ENCODE measurements at regions of chr7 and their contacts with region 1.

Region 1: GRCh38 chr7:16242920-16243319 is 178.4 kb downstream of the CRPPA start:
- DNase-seq: no peak
- ATAC-seq: no peak
- H3K4me3 ChIP-seq: no peak overlapping the region
- H3K27ac ChIP-seq: no peak overlapping the region
- H3K4me1 ChIP-seq: no peaks in the 10 kb centered on the region
- H3K27me3 ChIP-seq: no peaks in the 10 kb centered on the region
- CTCF ChIP-seq: no peak

Region 2: DNA sequence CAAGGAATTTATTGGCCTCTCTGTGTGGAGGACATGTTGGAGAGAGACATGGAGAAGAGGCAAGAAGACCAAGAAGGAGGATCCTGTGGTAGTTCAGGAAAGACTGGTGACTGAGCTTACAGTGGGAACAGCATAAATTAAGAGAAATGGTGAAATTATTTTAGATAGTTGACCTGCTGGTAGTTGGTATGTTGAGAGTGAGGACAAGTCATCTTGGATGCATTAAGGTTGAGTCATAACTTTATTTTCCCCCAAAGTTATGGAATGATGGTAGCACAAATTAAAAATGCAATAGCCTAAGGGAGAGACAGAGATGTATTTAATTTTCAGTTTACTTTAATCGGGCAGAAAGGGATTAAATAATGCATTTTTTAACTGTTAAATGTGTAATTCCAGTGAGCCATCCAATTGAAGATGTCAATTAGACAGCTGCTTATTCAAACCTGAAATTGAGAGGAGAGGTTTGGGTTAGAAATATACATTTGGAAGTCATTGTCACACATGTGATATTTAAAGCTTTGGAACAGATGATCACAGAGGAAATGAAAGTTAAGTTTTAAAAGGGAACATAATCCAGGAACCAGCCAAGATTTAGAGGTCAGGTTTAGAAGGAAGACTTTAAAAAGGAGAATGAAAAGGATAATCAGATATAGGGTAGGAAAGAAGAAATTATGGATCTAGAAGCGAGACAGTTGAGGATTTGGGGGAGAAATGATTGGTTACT is 1421.0 kb before region 1 on chr7:
- CTCF ChIA-PET with region 1: no interaction called
- POLR2A ChIA-PET with region 1: interaction called, 18 read pairs
- in situ Hi-C with region 1: no loop called
- intact Hi-C with region 1: no loop called
- DNase-seq: no peak
- ATAC-seq: no peak
- H3K4me3 ChIP-seq: no peak overlapping the region
- H3K27ac ChIP-seq: no peak overlapping the region
- H3K4me1 ChIP-seq: no peaks in the 10 kb centered on the region
- H3K27me3 ChIP-seq: no peaks in the 10 kb centered on the region
- CTCF ChIP-seq: no peak

Region 3: GRCh38 chr7:16564909-16565426 is 322.0 kb after region 1 on chr7:
- CTCF ChIA-PET with region 1: no interaction called
- POLR2A ChIA-PET with region 1: no interaction called
- in situ Hi-C with region 1: no loop called
- intact Hi-C with region 1: no loop called
- DNase-seq: peak; percentile 42
- ATAC-seq: peak; percentile 82
- H3K4me3 ChIP-seq: no peak overlapping the region
- H3K27ac ChIP-seq: no peak overlapping the region
- H3K4me1 ChIP-seq: no peaks in the 10 kb centered on the region
- H3K27me3 ChIP-seq: no peaks in the 10 kb centered on the region
- CTCF ChIP-seq: peak; percentile 87

Measured in Panc1 (cell line).